ENCODE measurements at regions of chr11 and their contacts with region 1.

Region 1: DNA sequence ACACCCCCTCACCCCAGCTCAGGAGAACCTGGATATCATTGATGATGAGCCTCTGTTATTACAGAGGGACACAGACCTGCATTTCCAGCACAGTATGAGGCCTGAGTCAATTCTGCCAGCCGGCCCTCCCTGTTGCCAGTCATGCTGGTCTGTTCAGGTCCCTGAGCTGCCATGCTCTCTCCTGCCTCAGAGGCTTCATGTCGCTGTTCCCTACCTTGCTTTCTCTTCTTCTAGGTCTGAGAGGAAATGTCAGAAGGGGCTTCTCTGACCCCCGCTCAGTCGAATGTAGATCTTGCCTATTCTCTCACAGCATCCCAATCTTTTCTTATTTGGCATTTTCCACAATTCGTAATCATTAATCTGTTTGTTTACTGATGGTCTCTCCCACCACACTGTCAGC is 21.8 kb upstream of the ABCC8 start:
- DNase-seq: no peak
- H3K4me3 ChIP-seq: no peak overlapping the region
- H3K27ac ChIP-seq: no peak overlapping the region
- H3K4me1 ChIP-seq: no peaks in the 10 kb centered on the region
- H3K27me3 ChIP-seq: no peaks in the 10 kb centered on the region
- CTCF ChIP-seq: no peak

Region 2: DNA sequence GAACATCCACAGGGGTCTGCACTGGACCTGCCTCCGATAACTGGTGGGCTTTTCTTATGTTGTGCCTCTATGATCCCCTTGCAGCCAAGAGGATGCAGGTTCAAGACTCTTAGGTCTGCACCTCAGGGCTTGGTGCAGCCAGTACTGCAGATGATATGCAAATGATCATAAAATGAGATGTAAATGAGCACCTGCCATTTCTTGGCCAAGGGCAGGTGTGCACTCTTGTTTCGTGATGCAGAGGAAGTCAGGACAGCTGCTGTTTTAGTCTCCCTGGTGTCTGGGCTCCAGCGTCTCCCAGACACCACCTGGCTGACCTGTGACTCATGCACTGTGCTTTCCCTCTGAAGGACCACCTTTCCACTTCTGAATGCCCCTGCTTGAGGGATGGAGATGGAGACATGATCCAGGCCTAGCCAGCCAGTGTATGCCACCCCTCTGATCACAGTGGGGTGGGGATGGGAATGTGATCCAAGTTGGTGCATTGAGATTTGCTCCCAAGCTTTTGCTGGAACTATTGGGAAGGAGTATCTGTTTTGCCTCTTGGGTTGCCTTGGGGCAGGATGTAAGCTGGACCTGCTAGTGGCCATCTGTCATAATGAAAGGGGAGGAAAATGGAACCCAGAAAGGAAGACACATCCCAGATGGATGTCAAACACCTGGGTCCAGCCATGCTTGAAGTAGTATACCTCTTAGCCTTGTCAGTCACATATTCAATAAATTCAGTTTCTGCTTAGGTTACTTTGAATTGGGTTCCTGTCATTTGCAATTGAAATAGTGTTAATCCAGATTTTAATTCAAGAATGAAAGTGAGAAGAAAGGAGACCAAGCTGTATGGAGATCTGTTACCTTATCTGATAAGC is 106.8 kb before region 1 on chr11:
- CTCF ChIA-PET with region 1: interaction called, 4 read pairs
- dilution Hi-C with region 1: no loop called
- in situ Hi-C with region 1: loop called (anchors 10 kb)
- intact Hi-C with region 1: no loop called
- DNase-seq: no peak
- H3K4me3 ChIP-seq: no peak overlapping the region
- H3K27ac ChIP-seq: no peak overlapping the region
- H3K4me1 ChIP-seq: no peaks in the 10 kb centered on the region
- H3K27me3 ChIP-seq: no peaks in the 10 kb centered on the region
- CTCF ChIP-seq: no peak

Region 3: DNA sequence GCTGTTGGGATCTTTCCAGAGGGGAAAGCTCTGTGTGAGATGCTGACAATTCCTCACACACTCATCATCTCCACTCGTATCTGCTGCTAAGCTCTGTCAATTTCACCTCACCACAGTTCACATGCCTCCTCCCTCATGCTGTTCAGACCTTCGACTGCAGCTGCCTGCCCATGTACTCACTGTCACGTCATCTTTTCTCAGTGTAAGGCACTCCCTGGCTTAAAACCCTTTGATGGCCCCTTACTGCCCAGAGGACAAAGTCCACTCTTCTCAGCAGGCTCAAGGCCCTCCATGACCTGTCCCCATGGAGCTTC is 33.3 kb after region 1 on chr11:
- CTCF ChIA-PET with region 1: no interaction called
- dilution Hi-C with region 1: no loop called
- in situ Hi-C with region 1: no loop called
- intact Hi-C with region 1: no loop called
- DNase-seq: no peak
- H3K4me3 ChIP-seq: no peak overlapping the region
- H3K27ac ChIP-seq: no peak overlapping the region
- H3K4me1 ChIP-seq: no peaks in the 10 kb centered on the region
- H3K27me3 ChIP-seq: peaks cover 7% of the 10 kb centered on the region
- CTCF ChIP-seq: no peak

Measured in mammary epithelial cell (primary cell).